T-cell (primary cell): ENCODE measurements at regions of chr3 and their contacts with region 1.

Region 1: DNA sequence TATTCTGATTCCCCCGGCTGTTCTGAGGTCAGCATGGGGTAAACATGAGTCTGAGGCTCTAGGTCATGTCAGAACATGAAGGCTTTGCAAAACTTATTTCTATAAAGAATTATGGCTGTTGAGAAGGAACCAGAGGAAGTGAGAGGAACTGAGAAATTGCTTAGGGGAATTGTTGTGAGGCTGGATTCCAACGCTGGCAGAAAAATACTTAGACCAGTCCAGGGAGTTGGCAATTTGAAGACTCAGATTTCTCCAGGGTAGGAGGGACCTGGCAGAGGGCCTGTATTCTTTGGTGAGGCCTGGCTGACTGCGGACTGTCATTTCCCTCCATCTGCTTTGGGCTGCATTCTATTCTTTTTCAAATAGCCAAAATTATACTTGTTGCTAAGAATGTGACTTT is 155.5 kb downstream of the PLD1 start:
- DNase-seq: no peak
- ATAC-seq: no peak
- H3K4me3 ChIP-seq: no peak overlapping the region
- H3K4me3 Mint-ChIP-seq: no peak overlapping the region
- H3K27ac ChIP-seq: no peak overlapping the region
- H3K27ac Mint-ChIP-seq: no peak overlapping the region
- H3K4me1 ChIP-seq: no peaks in the 10 kb centered on the region
- H3K4me1 Mint-ChIP-seq: no peaks in the 10 kb centered on the region
- H3K27me3 ChIP-seq: no peaks in the 10 kb centered on the region
- H3K27me3 Mint-ChIP-seq: peaks cover 0 to 3% of the 10 kb centered on the region in 2 donors

Region 2: DNA sequence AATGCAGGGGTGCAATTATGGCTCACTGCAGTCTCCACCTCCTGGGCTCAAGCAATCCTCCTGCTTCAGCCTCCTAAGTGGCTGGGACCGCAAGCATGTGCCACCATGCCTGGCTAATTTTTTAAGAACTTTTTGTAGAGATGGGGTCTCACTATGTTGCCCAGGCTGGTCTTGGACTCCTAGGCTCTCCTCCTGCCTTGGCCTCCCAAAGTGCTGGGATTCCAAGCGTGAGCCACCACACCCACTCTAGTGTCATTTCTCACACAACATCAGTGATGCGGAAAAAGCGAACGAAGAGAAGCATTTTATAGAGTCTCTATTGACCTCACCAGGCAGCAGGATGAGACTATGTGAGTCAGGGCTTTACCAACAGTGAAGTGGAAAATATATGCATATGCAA is 17.7 kb after region 1 on chr3:
- CTCF ChIA-PET with region 1: interaction called in 1 of 2 experiments, 11 read pairs
- POLR2A ChIA-PET with region 1: interaction called in 1 of 2 experiments, 3 read pairs
- DNase-seq: no peak
- ATAC-seq: no peak
- H3K4me3 ChIP-seq: no peak overlapping the region
- H3K4me3 Mint-ChIP-seq: no peak overlapping the region
- H3K27ac ChIP-seq: no peak overlapping the region
- H3K27ac Mint-ChIP-seq: no peak overlapping the region
- H3K4me1 ChIP-seq: no peaks in the 10 kb centered on the region
- H3K4me1 Mint-ChIP-seq: no peaks in the 10 kb centered on the region
- H3K27me3 ChIP-seq: no peaks in the 10 kb centered on the region
- H3K27me3 Mint-ChIP-seq: no peaks in the 10 kb centered on the region